ENCODE measurements at regions of chr16 and their contacts with region 1.

Region 1: GRCh38 chr16:78211893-78212292 is 112.4 kb downstream of the WWOX start:
- DNase-seq: peak; percentile 81
- H3K4me3 ChIP-seq: no peak overlapping the region
- H3K27ac ChIP-seq: peak overlapping the region; percentile 85
- H3K4me1 ChIP-seq: peaks cover 39% of the 10 kb centered on the region
- H3K27me3 ChIP-seq: no peaks in the 10 kb centered on the region
- CTCF ChIP-seq: no peak

Region 2: GRCh38 chr16:78116946-78117345 is 94.9 kb before region 1 on chr16:
- CTCF ChIA-PET with region 1: no interaction called
- dilution Hi-C with region 1: no loop called
- in situ Hi-C with region 1: no loop called
- intact Hi-C with region 1: no loop called
- DNase-seq: no peak
- H3K4me3 ChIP-seq: no peak overlapping the region
- H3K27ac ChIP-seq: no peak overlapping the region
- H3K4me1 ChIP-seq: no peaks in the 10 kb centered on the region
- H3K27me3 ChIP-seq: no peaks in the 10 kb centered on the region
- CTCF ChIP-seq: no peak

Region 3: DNA sequence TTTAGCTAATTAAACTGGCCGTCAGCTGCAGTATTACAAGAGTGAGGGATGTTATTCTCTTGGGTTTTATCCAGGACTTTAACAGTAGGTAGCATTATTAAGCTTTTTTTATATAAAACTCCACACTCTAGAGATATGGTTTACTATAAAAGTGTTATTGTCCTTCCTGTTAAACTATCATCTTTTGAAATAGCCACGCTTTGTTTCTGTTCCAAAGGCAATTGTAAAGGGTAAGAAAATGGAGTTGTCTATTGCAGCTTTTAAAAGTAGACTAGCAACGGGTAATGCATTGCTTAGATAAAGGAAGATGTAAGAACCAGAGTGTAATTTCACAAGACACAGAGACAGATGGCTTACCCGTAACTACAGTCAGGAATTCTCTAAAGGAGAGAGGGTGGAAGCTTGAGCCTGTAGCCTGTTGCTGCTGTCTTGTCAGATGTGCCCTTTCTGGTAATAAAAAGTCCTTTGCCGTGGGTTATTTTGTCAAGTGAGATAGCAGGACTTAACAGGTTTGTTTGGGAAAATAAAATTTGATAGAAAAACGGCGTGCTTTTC is 56.0 kb before region 1 on chr16:
- CTCF ChIA-PET with region 1: no interaction called
- dilution Hi-C with region 1: no loop called
- in situ Hi-C with region 1: no loop called
- intact Hi-C with region 1: no loop called
- DNase-seq: no peak
- H3K4me3 ChIP-seq: no peak overlapping the region
- H3K27ac ChIP-seq: no peak overlapping the region
- H3K4me1 ChIP-seq: no peaks in the 10 kb centered on the region
- H3K27me3 ChIP-seq: no peaks in the 10 kb centered on the region
- CTCF ChIP-seq: no peak

Region 4: DNA sequence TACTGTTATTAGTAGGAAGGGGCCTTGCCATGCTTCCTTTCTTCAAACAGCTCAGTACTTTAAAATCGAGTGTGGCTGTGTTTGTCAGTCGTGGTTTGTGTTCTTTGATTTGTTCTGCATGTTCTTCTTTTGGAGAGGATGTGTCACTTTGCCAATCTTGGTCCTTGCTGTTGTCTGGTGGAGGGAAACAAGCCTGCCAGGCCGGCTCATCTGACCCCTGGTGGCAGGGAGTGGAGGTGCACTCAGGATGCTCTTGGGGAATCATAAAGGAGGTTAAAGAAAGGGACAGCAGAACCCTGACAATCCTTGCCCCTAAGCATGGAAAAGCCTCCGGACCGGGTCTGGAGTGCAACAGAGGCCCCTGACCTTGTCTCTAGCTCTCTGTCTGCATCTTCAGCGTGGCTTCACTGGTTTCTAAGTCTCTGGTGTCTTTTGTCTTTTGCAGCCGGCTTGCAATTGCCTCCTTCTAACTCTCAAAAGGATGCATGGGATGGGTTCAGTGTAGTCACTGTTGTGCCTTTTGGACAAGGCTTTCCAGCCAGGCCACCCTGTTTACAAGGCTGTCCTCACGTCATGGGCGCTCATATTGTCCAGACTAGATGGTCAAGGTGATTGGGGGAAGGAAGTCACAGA is 23.4 kb after region 1 on chr16:
- CTCF ChIA-PET with region 1: no interaction called
- dilution Hi-C with region 1: no loop called
- in situ Hi-C with region 1: no loop called
- intact Hi-C with region 1: loop called (anchors 2 kb)
- DNase-seq: peak; percentile 54
- H3K4me3 ChIP-seq: no peak overlapping the region
- H3K27ac ChIP-seq: no peak overlapping the region
- H3K4me1 ChIP-seq: no peaks in the 10 kb centered on the region
- H3K27me3 ChIP-seq: no peaks in the 10 kb centered on the region
- CTCF ChIP-seq: peak; percentile 95 to 98

Measured in mammary epithelial cell (primary cell).